ENCODE measurements at regions of chr10 and their contacts with region 1.

Region 1: GRCh38 chr10:61992671-61993668 is 91.5 kb downstream of the ARID5B start:
- DNase-seq: peak; percentile 94
- H3K4me3 ChIP-seq: peak overlapping the region; percentile 40
- H3K27ac ChIP-seq: peak overlapping the region; percentile 84
- H3K4me1 ChIP-seq: peaks cover 54% of the 10 kb centered on the region
- H3K27me3 ChIP-seq: no peaks in the 10 kb centered on the region
- CTCF ChIP-seq: no peak

Region 2: DNA sequence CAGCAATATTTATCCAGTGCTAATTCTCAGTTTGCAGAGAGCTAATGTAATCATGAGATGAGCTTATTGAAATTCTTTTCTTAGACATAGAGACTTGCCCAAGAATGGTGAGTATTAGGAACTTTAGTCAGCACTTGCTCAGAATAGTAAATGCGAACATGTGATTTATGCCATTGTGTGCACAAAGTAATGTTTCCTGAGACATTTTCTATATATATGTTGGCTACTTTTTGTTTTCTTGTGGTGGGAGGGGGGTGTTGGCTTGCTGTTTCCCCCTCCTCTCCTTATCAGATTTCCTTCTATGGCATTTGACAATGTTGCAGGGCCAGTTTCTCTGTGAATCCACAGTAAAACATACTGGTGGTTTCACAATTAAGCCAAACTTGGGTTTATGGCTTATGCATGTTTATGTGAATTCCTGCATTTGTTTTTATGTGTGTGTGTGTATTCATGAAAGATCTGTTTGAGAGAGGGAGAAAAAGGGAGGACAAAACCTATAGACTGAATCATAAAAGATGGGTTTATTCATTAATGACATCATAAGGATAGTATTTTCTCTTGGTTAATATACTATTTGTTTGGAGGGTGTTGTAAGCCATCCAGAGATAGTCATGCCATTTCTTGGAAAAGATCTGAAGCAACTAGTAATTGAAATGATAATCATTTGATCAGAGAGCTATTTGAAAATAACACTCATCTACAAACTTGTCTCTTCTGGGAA is 55.2 kb before region 1 on chr10:
- CTCF ChIA-PET with region 1: no interaction called
- POLR2A ChIA-PET with region 1: no interaction called
- intact Hi-C with region 1: loop called (anchors 1 kb)
- DNase-seq: peak; percentile 35
- H3K4me3 ChIP-seq: no peak overlapping the region
- H3K27ac ChIP-seq: peak overlapping the region; percentile 66
- H3K4me1 ChIP-seq: peaks cover 57% of the 10 kb centered on the region
- H3K27me3 ChIP-seq: no peaks in the 10 kb centered on the region
- CTCF ChIP-seq: no peak

Region 3: DNA sequence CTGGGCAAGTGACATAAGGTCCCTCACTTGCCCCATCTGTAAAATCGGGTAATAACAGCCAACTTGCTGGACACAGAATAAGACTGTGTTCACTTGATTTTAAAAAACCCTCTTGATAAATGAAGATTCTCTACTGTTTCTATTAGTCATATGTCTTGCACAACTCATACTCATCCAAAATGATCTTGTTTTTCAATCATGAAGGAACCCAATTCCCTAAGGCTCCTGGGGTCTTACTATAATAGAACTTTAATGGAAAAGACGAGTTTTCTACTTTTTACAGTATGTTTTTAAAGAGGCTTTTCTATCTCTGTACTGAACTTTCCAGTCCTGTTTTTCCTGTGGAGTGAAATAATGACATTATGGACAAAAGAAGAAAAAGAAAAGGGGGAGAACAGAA is 12.3 kb after region 1 on chr10:
- CTCF ChIA-PET with region 1: no interaction called
- POLR2A ChIA-PET with region 1: no interaction called
- intact Hi-C with region 1: no loop called
- DNase-seq: no peak
- H3K4me3 ChIP-seq: no peak overlapping the region
- H3K27ac ChIP-seq: no peak overlapping the region
- H3K4me1 ChIP-seq: peaks cover 19% of the 10 kb centered on the region
- H3K27me3 ChIP-seq: no peaks in the 10 kb centered on the region
- CTCF ChIP-seq: no peak

Region 4: GRCh38 chr10:62244780-62245467 is 252.0 kb after region 1 on chr10:
- CTCF ChIA-PET with region 1: interaction called, 3 read pairs
- POLR2A ChIA-PET with region 1: no interaction called
- intact Hi-C with region 1: loop called (anchors 1 kb)
- DNase-seq: peak; percentile 91
- H3K4me3 ChIP-seq: peak overlapping the region; percentile 29
- H3K27ac ChIP-seq: peak overlapping the region; percentile 68
- H3K4me1 ChIP-seq: peaks cover 78% of the 10 kb centered on the region
- H3K27me3 ChIP-seq: no peaks in the 10 kb centered on the region
- CTCF ChIP-seq: peak; percentile 93

Region 5: DNA sequence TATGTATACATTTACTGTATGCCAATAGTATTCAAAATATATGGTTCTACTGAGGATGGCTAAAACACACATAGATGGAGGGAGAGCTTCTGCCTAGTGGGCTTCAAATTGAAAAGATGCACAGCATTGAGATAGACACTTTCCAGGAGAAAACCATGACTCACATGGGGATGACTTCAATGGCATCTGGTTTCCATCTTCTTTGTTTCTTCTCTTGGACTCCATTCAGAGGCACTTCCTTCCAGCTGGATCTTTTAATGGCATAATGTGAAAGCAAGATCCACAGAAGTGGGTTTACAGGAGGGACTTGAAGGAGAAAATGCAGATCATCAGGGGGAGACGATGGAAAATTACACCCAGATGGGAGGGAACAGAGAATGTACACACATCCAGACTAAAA is 466.1 kb after region 1 on chr10:
- CTCF ChIA-PET with region 1: no interaction called
- POLR2A ChIA-PET with region 1: no interaction called
- intact Hi-C with region 1: no loop called
- DNase-seq: peak; percentile 83
- H3K4me3 ChIP-seq: no peak overlapping the region
- H3K27ac ChIP-seq: no peak overlapping the region
- H3K4me1 ChIP-seq: peaks cover 11% of the 10 kb centered on the region
- H3K27me3 ChIP-seq: no peaks in the 10 kb centered on the region
- CTCF ChIP-seq: no peak

Region 6: DNA sequence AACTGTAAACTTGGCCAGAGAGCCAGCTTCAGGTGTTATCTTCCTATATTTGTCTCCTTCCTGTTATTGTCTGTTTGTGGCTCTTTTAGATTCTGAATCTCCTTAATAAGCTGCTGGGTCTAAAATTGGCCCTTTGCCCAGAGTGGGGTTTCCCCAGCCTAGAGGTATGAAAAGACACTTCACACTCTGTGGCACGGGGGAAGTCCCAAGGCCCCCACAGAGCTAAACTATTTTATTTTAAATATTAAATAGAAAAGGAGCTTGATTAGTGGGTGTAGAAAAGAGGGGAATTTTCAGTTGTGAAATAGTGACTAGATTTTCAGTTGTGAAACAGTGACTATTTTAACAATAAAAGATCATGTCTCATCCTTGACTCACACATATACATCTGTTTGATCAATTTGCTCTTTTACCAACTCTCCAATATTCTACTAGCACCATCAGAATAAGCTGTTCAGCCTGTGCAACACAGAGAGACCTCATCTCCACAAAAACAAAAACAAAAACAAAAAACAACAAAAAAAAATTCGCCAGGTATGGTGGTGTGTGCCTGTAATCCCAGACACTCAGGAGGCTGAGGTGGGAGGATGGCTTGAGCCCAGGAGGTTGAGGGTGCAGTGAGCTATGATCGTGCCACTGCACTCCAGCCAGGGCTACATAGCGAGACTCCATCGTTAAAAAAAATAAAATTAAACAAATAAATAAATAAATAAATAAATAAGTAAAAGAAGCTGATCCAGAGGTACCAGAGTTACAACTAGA is 786.7 kb after region 1 on chr10:
- CTCF ChIA-PET with region 1: no interaction called
- POLR2A ChIA-PET with region 1: no interaction called
- intact Hi-C with region 1: no loop called
- DNase-seq: peak; percentile 38
- H3K4me3 ChIP-seq: no peak overlapping the region
- H3K27ac ChIP-seq: no peak overlapping the region
- H3K4me1 ChIP-seq: peaks cover 8% of the 10 kb centered on the region
- H3K27me3 ChIP-seq: no peaks in the 10 kb centered on the region
- CTCF ChIP-seq: no peak

Measured in A673 (cell line).